Endothelial cell of umbilical vein (primary cell): ENCODE measurements at regions of chr22 and their contacts with region 1.

Region 1: DNA sequence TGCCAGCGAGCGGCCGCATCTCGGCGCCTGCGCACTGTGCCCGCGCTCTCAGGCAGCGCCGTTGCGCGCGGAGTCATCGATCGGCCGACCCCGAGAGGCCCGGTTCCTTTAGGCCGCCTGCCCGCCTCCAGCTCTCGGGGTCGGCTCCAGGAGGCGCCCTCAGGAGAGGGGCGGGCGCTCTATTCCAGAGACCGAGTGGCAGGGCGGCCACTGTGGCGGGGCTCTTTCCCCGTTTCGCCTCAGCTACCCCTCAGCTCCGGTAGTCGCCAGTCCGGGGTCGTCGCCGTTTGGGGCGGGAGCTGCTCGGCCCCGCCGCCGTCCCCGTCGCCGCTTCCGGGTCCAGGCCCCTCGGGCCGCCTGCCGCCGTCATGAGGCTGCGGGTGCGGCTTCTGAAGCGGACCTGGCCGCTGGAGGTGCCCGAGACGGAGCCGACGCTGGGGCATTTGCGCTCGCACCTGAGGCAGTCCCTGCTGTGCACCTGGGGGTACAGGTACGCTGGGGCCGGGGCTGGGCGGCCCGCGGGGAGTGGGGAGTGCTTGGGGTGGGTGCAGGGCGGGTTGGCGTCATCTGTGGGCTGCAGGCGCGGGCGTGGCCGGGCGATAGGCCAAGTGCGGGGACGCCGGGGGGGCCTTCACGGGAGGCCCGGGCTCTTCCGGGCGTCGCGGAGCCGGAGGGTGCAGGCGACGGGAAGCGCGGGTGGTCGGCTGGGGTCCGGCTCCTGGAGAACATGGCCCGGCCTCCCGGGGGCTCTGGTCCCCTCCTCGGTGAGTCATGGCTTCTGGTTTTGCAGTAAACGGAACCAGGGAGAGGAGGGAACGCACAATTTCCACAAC is at the start of gene FBXO7:
- DNase-seq: peak; percentile 92
- H3K4me3 ChIP-seq: peak within 1 kb of the TSS; percentile 77 to 88 (median 81)
- H3K27ac ChIP-seq: peak within 1 kb of the TSS; percentile 90
- H3K4me1 ChIP-seq: peaks cover 20% of the 10 kb centered on the region
- H3K27me3 ChIP-seq: no peaks in the 10 kb centered on the region
- CTCF ChIP-seq: peak in 1 of 2 donors; percentile 66
- POLR2A ChIP-seq: peak; percentile 20
- total RNA-seq, gene FBXO7: 79.0 and 81.1 TPM in 2 replicates

Region 2: GRCh38 chr22:32185821-32186220 is 289.0 kb before region 1 on chr22:
- CTCF ChIA-PET with region 1: no interaction called
- POLR2A ChIA-PET with region 1: no interaction called
- dilution Hi-C with region 1: no loop called
- intact Hi-C with region 1: no loop called
- DNase-seq: no peak
- H3K4me3 ChIP-seq: no peak overlapping the region
- H3K27ac ChIP-seq: no peak overlapping the region
- H3K4me1 ChIP-seq: no peaks in the 10 kb centered on the region
- H3K27me3 ChIP-seq: peaks cover 2 to 3% of the 10 kb centered on the region in 2 experiments
- CTCF ChIP-seq: no peak
- POLR2A ChIP-seq: no peak

Region 3: DNA sequence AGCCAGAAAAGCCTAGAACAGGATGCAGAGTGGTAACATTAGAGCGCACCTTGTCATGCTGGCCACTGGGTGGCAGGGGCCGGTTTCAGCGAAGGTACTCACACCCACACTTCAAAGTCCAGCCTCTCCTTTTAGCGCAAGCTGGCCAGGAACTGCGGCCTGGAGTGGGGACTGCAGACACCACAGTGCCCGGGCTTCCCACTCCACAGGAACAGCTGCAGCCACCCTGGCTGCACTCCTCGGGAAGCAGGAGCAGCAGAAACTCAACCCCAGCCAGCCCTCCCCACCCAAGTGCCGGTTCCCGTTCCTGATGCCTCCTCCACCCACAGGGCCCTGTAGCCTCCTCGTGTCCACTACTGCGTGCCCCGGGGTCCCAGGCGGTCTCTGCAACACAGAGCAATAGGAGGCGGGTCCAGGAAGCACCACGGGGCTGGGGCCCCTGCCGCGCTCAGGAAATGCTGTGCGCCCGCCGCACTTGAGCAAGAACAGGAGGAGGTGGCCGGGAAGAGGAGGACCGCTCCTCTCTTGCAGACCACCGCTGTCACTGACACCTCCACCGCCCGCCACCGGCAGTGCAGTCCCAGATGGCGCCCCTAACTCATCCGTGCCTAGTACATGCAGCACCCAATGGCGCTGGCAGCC is 272.2 kb before region 1 on chr22:
- CTCF ChIA-PET with region 1: no interaction called
- POLR2A ChIA-PET with region 1: no interaction called
- dilution Hi-C with region 1: no loop called
- intact Hi-C with region 1: loop called (anchors 1 kb)
- DNase-seq: peak; percentile 45
- H3K4me3 ChIP-seq: no peak overlapping the region
- H3K27ac ChIP-seq: no peak overlapping the region
- H3K4me1 ChIP-seq: no peaks in the 10 kb centered on the region
- H3K27me3 ChIP-seq: peaks cover 4 to 19% of the 10 kb centered on the region in 2 experiments
- CTCF ChIP-seq: peak; percentile 51 to 76
- POLR2A ChIP-seq: no peak

Region 4: GRCh38 chr22:32411829-32412592 is 62.8 kb before region 1 on chr22 and contains the start of gene RTCB:
- CTCF ChIA-PET with region 1: interaction called, 33 read pairs
- POLR2A ChIA-PET with region 1: interaction called, 3 read pairs
- dilution Hi-C with region 1: no loop called
- intact Hi-C with region 1: loop called (anchors 1 kb)
- DNase-seq: peak; percentile 94
- H3K4me3 ChIP-seq: peak within 1 kb of the TSS; percentile 98 to 100 (median 100)
- H3K27ac ChIP-seq: peak within 1 kb of the TSS; percentile 83
- H3K4me1 ChIP-seq: peaks cover 14% of the 10 kb centered on the region
- H3K27me3 ChIP-seq: peaks cover 0 to 2% of the 10 kb centered on the region in 2 experiments
- CTCF ChIP-seq: no peak
- POLR2A ChIP-seq: peak; percentile 64
- total RNA-seq, gene RTCB: 97.4 and 98.7 TPM in 2 replicates